ENCODE measurements at regions of chr9 and their contacts with region 1.

Region 1: GRCh38 chr9:27333241-27334052 is 36.5 kb upstream of the EQTN start:
- DNase-seq: peak; percentile 40
- ATAC-seq: peak; percentile 90
- H3K4me3 ChIP-seq: no peak overlapping the region
- H3K27ac ChIP-seq: no peak overlapping the region
- H3K4me1 ChIP-seq: no peaks in the 10 kb centered on the region
- H3K27me3 ChIP-seq: no peaks in the 10 kb centered on the region
- CTCF ChIP-seq: peak; percentile 70 to 78 (median 71)
- EP300 ChIP-seq: no peak
- POLR2A ChIP-seq: no peak
- RAD21 ChIP-seq: peak; percentile 93

Region 2: GRCh38 chr9:27353474-27354229 is 20.2 kb after region 1 on chr9:
- CTCF ChIA-PET with region 1: interaction called, 15 read pairs
- POLR2A ChIA-PET with region 1: no interaction called
- RAD21 ChIA-PET with region 1: interaction called, 7 read pairs
- SMC1A ChIA-PET with region 1: interaction called, 20 read pairs
- in situ Hi-C with region 1: no loop called
- intact Hi-C with region 1: no loop called
- DNase-seq: peak; percentile 46
- ATAC-seq: peak; percentile 88
- H3K4me3 ChIP-seq: no peak overlapping the region
- H3K27ac ChIP-seq: 0 out of 2 replicates have a peak overlapping the region, but pooled peaks have one; percentile 7
- H3K4me1 ChIP-seq: peaks cover 30% of the 10 kb centered on the region
- H3K27me3 ChIP-seq: no peaks in the 10 kb centered on the region
- CTCF ChIP-seq: no peak
- EP300 ChIP-seq: no peak
- POLR2A ChIP-seq: no peak
- RAD21 ChIP-seq: no peak

Region 3: DNA sequence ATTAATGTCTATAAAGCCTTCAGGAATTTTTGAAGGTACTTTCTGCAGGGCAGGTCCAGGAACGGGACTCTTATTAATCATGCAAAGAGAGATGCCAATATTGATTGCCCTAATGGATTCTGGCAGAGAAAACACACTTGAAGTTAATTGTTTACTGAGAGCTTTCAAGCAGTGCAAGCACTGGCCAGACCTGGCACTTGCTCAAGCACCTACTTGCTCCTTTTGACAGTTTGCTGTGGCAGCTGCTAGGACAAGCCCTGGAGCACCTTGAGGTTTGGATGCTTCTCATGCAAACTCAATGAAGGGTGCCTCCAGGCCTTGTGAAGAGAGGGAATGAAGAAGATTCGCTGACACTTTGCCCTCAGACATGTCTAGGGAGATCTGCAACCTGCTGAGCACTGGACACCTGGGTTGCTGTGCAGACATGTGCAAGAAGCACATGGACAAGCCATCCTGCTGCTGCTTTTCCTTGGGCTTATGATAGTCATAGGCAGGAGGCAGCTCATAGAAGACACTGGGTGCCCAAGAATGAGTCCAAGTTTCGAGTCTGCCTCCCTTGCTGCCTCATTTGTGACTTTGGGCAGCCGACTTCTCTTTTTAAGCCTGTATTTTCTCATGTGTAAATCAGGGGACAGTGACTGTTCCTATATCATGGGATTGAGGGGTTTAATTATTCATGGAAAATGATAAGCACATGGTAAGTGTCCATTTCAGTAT is 52.3 kb after region 1 on chr9:
- CTCF ChIA-PET with region 1: interaction called, 12 read pairs
- POLR2A ChIA-PET with region 1: no interaction called
- RAD21 ChIA-PET with region 1: interaction called, 4 read pairs
- SMC1A ChIA-PET with region 1: interaction called, 7 read pairs
- in situ Hi-C with region 1: no loop called
- intact Hi-C with region 1: no loop called
- DNase-seq: no peak
- ATAC-seq: no peak
- H3K4me3 ChIP-seq: no peak overlapping the region
- H3K27ac ChIP-seq: no peak overlapping the region
- H3K4me1 ChIP-seq: peaks cover 13% of the 10 kb centered on the region
- H3K27me3 ChIP-seq: no peaks in the 10 kb centered on the region
- CTCF ChIP-seq: no peak
- EP300 ChIP-seq: no peak
- POLR2A ChIP-seq: no peak
- RAD21 ChIP-seq: no peak

Region 4: DNA sequence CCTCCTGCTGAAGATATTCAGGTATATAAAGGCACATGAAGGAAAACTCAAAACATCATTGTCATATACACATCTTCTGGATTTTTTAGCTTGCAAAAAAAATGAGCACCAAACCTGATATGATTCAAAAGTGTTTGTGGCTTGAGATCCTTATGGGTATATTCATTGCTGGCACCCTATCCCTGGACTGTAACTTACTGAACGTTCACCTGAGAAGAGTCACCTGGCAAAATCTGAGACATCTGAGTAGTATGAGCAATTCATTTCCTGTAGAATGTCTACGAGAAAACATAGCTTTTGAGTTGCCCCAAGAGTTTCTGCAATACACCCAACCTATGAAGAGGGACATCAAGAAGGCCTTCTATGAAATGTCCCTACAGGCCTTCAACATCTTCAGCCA is 190.8 kb after region 1 on chr9 and contains the start of gene IFNK:
- CTCF ChIA-PET with region 1: interaction called, 116 read pairs
- POLR2A ChIA-PET with region 1: no interaction called
- RAD21 ChIA-PET with region 1: interaction called, 97 read pairs
- SMC1A ChIA-PET with region 1: interaction called, 79 read pairs
- in situ Hi-C with region 1: loop called (anchors 5 kb)
- intact Hi-C with region 1: loop called (anchors 1 kb)
- DNase-seq: no peak
- ATAC-seq: no peak
- H3K4me3 ChIP-seq: no peak within 1 kb of the TSS
- H3K27ac ChIP-seq: no peak within 1 kb of the TSS
- H3K4me1 ChIP-seq: no peaks in the 10 kb centered on the region; the same call in none of the 2 replicates
- H3K27me3 ChIP-seq: no peaks in the 10 kb centered on the region
- CTCF ChIP-seq: no peak
- EP300 ChIP-seq: no peak
- POLR2A ChIP-seq: no peak
- RAD21 ChIP-seq: no peak
- polyA plus RNA-seq, gene IFNK: not detected

Region 5: DNA sequence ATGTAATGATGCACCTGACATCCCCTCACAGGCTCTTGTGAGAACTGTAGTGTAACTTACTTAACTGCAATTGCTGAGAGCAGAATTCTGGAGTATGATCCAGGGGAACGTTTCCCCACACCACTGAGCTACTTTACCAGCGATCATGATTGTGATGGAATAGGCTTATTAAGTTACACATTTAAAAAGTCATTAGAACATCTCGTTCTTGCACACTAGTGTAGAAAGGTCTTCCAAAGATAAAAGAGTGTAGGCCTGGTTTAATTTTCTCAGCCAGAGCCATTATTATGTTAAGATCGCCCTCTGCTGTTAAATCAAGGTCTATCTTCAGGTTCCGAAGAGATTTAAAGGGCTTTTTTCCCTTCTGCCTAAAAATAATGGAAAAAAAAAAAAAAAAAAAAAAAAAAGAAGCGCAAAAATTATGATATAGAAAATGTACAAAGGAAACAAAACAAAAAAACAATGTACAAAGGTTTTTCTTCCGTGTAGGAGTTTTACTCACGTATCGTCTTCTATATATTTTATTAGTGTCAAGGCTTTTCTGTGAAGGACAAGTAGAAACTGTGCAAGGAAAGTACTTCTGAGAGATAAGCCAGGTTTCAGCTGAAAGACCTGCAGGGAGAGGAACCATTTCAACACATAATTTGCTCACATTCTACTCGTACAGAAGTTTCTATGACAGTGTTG is 214.8 kb after region 1 on chr9:
- CTCF ChIA-PET with region 1: interaction called, 100 read pairs
- POLR2A ChIA-PET with region 1: interaction called, 3 read pairs
- RAD21 ChIA-PET with region 1: interaction called, 85 read pairs
- SMC1A ChIA-PET with region 1: interaction called, 91 read pairs
- in situ Hi-C with region 1: no loop called
- intact Hi-C with region 1: loop called (anchors 1 kb)
- DNase-seq: no peak
- ATAC-seq: peak; percentile 74
- H3K4me3 ChIP-seq: no peak overlapping the region
- H3K27ac ChIP-seq: no peak overlapping the region
- H3K4me1 ChIP-seq: no peaks in the 10 kb centered on the region
- H3K27me3 ChIP-seq: no peaks in the 10 kb centered on the region
- CTCF ChIP-seq: peak; percentile 24 to 58 (median 30); a peak in 3 of 6 replicates
- EP300 ChIP-seq: no peak
- POLR2A ChIP-seq: no peak
- RAD21 ChIP-seq: peak; percentile 75

Region 6: GRCh38 chr9:28073270-28073669 is 739.8 kb after region 1 on chr9:
- CTCF ChIA-PET with region 1: interaction called, 3 read pairs
- POLR2A ChIA-PET with region 1: no interaction called
- RAD21 ChIA-PET with region 1: interaction called, 14 read pairs
- SMC1A ChIA-PET with region 1: no interaction called
- in situ Hi-C with region 1: no loop called
- intact Hi-C with region 1: loop called (anchors 10 kb)
- DNase-seq: no peak
- ATAC-seq: peak; percentile 44; the same call in 2 of the 3 replicates
- H3K4me3 ChIP-seq: no peak overlapping the region
- H3K27ac ChIP-seq: no peak overlapping the region
- H3K4me1 ChIP-seq: no peaks in the 10 kb centered on the region
- H3K27me3 ChIP-seq: no peaks in the 10 kb centered on the region
- CTCF ChIP-seq: peak; percentile 22 to 50 (median 23); a peak in 3 of 6 replicates
- EP300 ChIP-seq: no peak
- POLR2A ChIP-seq: no peak
- RAD21 ChIP-seq: peak; percentile 57